ENCODE measurements at regions of chr7 and their contacts with region 1.

Region 1: DNA sequence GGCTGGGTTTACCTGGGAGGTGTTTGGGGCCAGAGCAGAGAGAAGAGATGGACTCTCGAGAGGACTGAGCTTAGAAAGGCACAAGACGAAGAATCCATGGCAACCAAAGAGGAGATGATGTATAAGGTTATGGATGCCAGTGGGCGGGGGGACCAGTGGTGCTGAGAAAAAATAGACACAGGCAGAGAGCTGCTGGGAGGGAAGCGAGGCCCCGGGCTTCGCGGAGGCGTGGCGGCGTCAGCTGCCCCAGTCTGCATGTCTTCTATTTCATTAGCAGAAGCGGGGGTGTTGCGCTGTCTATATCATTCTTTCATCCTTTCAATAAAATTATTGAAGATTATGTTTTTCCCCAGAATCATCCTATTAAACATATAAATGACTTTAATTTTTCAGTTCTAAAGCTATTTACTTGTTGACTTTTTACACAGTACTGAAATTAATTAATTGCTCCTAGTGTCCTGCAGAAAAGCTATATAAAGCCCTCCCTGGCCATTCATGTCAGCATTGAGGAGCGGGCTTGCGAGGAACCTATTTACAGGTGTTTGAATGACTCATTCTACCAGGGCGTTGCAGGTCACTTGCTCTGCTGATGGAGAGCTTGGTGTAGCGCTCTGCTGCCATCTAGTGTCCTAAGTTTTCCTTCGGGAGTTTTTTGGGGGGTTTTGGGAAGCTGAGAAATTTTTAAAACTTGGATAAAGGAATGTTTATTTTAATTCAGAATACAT is 42.9 kb upstream of the BHLHA15 start:
- DNase-seq: peak; percentile 50 to 74 (median 66)
- H3K4me3 ChIP-seq: no peak overlapping the region
- H3K27ac ChIP-seq: no peak overlapping the region
- H3K4me1 ChIP-seq: no peaks in the 10 kb centered on the region
- H3K27me3 ChIP-seq: no peaks in the 10 kb centered on the region

Region 2: DNA sequence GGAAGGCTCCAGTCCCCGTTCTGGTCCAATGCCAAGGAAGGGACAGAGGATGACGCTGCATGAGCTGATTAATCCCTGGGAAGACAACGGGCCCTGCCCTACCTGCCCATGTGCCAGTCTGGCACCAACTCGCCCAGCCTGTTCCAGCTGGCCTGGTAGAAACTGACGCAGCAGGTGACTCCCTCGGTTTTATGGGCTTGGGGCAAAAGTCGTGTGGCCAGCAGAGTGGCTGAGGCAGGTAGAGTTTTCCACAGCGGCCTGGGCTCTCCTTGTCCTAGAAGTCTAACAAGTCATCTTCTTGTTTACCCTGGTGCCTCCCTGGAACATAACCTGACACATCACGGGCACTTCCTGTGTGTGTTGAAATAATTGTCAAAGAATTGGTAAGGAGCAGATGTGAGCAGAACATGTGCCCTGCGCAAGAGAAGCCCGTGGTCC is 82.0 kb before region 1 on chr7:
- CTCF ChIA-PET with region 1: interaction called, 10 read pairs
- POLR2A ChIA-PET with region 1: no interaction called
- DNase-seq: no peak
- H3K4me3 ChIP-seq: no peak overlapping the region
- H3K27ac ChIP-seq: no peak overlapping the region
- H3K4me1 ChIP-seq: no peaks in the 10 kb centered on the region
- H3K27me3 ChIP-seq: peaks cover 0 to 1% (median 0%) of the 10 kb centered on the region in 5 experiments

Region 3: DNA sequence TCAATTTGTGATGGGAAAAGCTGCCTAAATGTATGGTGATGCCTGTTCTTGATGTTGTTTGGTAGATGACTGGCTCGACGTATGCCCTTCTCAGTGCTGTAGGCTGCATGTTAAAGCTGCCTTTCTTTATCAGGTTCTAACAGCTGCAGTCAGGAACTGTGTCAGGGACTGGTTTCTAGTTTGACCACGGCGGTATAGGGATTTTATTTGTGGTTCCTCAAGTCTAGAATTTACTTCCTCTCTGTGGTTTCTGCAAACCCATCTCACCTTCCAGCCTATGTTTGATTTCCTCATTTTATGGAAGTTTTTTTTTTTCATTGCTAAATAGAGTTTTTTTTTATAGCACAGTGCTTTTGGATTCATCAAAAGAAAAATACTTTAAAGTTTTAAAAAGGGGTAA is 35.2 kb before region 1 on chr7:
- CTCF ChIA-PET with region 1: interaction called, 42 read pairs
- POLR2A ChIA-PET with region 1: no interaction called
- DNase-seq: peak; percentile 97 to 99 (median 99)
- H3K4me3 ChIP-seq: peak overlapping the region in 1 of 7 experiments; percentile 37
- H3K27ac ChIP-seq: peak overlapping the region in 1 of 2 experiments; percentile 17
- H3K4me1 ChIP-seq: peaks cover 34 to 52% (median 46%) of the 10 kb centered on the region in 4 experiments
- H3K27me3 ChIP-seq: peaks cover 0 to 26% (median 13%) of the 10 kb centered on the region in 5 experiments

Region 4: DNA sequence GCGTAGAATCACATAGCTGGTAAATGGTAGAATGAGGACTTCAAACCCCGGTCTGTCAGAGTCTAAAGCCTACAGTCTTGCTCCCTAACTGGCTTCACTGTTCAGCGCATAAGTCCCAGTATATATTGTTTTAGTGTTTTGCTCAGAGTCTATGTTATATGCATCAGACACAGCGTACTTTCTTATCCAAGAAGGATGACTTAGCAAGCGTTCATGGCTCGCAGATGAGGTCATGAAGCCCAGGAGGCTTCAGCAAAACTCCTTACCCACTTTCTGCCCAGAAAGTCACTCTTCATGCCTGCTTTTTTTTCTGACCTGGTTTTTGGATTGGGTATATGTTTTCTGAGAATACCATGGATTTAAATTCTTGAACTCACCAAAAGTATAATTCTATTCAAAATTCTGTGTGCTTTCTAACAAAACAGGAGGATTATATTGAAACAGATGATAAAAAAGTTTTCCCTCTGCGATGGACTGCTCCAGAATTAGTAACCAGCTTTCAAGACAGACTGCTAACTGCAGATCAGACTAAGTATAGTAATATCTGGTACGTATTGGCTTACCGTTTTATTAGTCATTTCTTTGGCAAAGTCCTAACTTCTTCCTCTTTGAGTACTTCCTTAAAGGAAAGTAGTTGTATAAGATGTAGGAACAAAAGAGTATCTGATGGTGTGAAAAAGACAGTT is 18.3 kb after region 1 on chr7:
- CTCF ChIA-PET with region 1: interaction called, 13 read pairs
- POLR2A ChIA-PET with region 1: no interaction called
- DNase-seq: no peak
- H3K4me3 ChIP-seq: no peak overlapping the region
- H3K27ac ChIP-seq: no peak overlapping the region
- H3K4me1 ChIP-seq: peaks cover 0 to 3% (median 0%) of the 10 kb centered on the region in 4 experiments
- H3K27me3 ChIP-seq: no peaks in the 10 kb centered on the region

Region 5: DNA sequence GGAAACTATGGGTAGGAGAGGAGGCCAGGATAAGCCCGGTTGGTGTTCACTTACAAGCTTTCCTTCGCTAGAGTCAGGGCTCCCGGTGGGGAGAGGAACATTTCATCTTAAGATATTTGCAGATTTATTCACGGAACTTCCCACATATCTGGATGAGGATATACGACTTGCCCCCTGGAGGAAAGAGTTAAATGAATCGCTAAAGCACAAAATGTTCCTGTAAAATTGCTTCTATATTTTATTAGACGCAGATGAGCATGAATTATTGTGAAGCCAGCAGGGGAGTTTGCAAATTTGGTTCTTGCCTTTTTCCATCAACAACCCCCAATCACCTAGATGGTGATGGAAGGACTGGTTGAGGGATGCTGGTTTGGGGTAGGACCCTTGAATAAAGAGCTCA is 280.4 kb after region 1 on chr7:
- CTCF ChIA-PET with region 1: no interaction called
- POLR2A ChIA-PET with region 1: no interaction called
- DNase-seq: no peak
- H3K4me3 ChIP-seq: no peak overlapping the region
- H3K27ac ChIP-seq: no peak overlapping the region
- H3K4me1 ChIP-seq: no peaks in the 10 kb centered on the region
- H3K27me3 ChIP-seq: no peaks in the 10 kb centered on the region

Measured in common myeloid progenitor, CD34-positive (primary cell).